ENCODE measurements at regions of chr9 and their contacts with region 1.

Region 1: DNA sequence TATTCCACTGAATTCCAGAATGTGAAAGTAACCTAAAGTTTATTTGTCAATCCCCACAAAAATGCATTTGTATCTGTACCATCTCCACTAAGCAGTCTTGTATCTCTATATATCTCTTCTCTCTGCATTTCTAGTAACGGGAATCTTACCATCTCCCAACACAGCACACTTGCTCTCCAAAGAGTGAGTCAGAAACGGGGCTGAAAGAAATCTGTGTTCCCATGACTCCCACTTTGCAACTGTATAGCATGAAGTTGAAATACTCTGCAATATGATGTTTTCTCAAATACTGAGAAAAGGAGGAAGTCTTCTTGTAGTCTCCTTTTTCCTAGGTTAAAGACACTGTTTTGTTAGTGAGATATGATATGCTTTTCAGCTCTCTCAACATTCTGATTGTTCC is 848.8 kb upstream of the ACO1 start:
- DNase-seq: no peak
- H3K4me3 ChIP-seq: no peak overlapping the region
- H3K27ac ChIP-seq: no peak overlapping the region
- H3K4me1 ChIP-seq: no peaks in the 10 kb centered on the region
- H3K27me3 ChIP-seq: no peaks in the 10 kb centered on the region

Region 2: DNA sequence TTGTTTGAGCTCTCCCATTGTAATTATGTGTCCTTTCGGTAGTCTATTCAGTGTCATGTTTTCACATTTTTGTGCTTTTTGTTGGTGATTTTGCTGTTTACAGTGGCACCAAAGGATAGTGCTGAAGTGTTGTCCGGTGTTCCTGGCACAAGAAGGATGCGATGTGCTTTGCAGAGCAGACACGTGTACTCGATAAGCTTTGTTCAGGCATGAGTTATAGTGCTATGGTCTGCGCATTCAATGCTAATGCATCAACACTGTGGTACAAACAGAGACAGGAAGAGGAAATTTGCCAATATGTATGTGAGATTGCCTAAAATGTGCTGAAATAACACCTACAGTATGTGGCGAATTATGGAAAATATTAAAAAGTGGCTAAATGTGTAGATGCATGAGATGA is 64.6 kb before region 1 on chr9:
- in situ Hi-C with region 1: loop called (anchors 10 kb)
- DNase-seq: no peak
- H3K4me3 ChIP-seq: no peak overlapping the region
- H3K27ac ChIP-seq: no peak overlapping the region
- H3K4me1 ChIP-seq: no peaks in the 10 kb centered on the region
- H3K27me3 ChIP-seq: no peaks in the 10 kb centered on the region

Measured in GM23248 (cell line).